BJ (cell line): ENCODE measurements at regions of chr19 and their contacts with region 1.

Region 1: GRCh38 chr19:2887391-2887914 is 13.3 kb upstream of the ZNF57 start:
- DNase-seq: peak; percentile 29
- H3K4me3 ChIP-seq: no peak overlapping the region
- H3K27me3 ChIP-seq: no peaks in the 10 kb centered on the region
- CTCF ChIP-seq: peak; percentile 69

Region 2: DNA sequence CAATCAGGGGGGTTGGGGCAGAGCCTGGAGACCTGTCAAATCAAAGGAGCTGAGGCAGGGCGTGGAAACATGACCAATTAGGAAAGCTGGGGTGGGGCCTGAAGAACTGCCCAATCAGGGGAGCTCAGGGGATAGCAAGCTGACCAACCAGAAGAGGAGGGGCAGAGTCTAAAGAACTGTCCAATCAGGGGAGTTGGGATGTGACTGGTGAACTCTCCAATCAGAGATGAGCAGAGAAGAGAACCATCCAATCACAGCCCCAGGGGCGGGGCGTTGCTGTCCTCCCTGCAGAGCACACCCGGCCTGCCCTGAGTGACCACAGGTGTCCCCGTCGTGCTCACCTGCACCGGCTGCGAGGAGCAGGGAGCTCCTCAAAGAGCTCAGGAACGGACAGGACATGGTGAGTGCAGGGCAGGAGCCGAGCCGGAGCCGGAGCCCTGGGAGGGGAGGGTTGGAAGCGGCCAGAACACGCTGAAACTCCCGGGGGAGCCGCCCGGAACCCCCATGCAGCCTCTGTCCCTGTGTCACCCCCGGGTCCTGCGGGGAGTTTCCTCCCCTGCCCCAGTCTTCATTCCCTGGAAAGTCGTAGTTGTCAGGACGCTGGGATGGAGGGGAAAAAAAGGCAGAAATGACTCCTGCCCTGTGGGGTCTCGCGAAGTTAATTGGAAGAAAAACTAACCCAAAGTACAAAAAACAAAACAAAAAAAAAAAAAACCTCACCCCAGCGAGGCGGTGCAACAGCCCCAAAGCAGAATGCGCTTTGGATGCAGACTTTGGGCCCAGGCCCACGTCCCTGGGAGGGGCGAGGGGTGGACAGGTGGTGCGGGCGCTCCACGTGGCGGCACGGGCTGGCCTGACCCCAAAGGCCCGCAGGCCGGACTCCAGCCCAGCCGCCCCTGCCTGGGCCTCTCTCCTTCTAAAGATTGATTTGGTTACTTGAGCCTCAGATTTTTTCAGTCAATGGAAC is 20.1 kb before region 1 on chr19 and contains the start of gene ZNF556:
- CTCF ChIA-PET with region 1: interaction called, 11 read pairs
- POLR2A ChIA-PET with region 1: no interaction called
- DNase-seq: no peak
- H3K4me3 ChIP-seq: no peak within 1 kb of the TSS
- H3K27me3 ChIP-seq: no peaks in the 10 kb centered on the region
- CTCF ChIP-seq: no peak
- polyA plus RNA-seq, gene ZNF556: not detected in 2 replicates

Region 3: DNA sequence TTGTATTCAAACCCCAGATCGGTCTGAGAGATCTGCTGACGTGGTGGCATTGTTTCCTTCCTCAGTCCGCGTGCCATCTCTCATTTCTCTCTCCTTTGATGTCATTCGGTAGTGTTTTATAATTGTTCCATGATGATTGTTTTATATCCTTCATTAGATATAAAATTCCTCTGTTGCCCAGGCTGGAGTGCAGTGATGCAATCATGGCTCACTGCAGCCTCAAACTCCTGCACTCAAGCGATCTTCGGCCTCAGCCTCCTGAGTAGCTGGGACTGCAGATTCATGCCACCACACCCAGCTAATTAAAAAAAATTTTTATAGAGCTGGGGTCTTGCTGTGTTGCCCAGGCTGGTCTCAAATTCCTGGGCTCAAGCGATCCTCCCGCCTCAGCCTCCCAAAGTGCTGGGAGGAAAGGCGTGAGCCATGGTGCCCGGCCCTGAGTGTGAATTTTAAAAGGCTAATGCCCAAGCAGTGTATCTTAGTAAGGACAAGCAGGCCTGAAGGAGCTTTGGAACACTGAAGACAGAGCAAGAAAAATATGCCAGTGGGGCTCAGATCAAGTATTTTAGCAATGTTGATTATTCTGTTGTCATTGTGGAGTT is 18.6 kb after region 1 on chr19:
- CTCF ChIA-PET with region 1: interaction called, 11 read pairs
- POLR2A ChIA-PET with region 1: no interaction called
- DNase-seq: no peak
- H3K4me3 ChIP-seq: no peak overlapping the region
- H3K27me3 ChIP-seq: no peaks in the 10 kb centered on the region
- CTCF ChIP-seq: no peak